ENCODE measurements at regions of chr12 and their contacts with region 1.

Region 1: DNA sequence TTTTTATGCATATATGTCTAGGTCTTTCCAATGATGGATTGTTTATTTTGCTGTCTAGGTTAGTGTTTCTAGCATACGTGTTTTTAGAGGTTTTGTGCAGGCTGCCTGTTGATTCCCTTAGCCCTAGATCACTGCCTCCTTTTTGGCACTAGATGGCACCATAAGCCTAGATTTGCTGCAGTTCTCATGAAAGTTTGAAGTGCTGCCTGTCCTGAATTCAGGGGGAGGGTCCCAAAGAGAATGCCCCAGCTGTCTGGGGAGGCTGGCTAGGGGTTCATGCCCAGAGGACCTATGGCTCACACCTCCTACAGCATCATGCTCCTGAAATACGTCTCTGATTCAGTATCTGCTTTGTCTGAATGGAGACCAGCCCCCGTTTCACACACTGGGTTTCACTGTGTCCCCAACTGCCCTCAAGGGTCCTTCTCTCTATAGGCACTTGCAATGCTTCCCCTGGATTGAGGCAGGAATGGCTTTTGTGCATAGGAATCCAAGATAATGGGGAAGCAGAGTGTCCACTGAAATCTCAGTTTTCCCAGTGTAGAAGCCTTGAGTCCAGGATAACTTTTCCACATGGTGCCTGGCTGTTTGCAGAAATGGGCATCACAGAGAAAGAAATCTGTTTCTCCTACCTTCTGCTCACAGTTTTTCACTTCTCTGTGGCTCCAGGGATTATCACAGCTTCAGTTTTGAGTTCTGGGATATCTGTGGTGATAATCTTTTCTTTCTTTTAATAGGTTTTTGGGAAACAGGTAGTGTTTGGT is 14.2 kb upstream of the TXNRD1 start:
- DNase-seq: peak; percentile 72
- ATAC-seq: peak; percentile 88
- H3K4me3 ChIP-seq: no peak overlapping the region
- H3K27ac ChIP-seq: no peak overlapping the region
- H3K4me1 ChIP-seq: no peaks in the 10 kb centered on the region; the same call in 1 of the 2 replicates
- H3K27me3 ChIP-seq: no peaks in the 10 kb centered on the region
- CTCF ChIP-seq: peak; percentile 89
- POLR2A ChIP-seq: no peak
- RAD21 ChIP-seq: peak; percentile 94

Region 2: GRCh38 chr12:104358347-104359003 is 157.1 kb after region 1 on chr12:
- CTCF ChIA-PET with region 1: no interaction called
- POLR2A ChIA-PET with region 1: no interaction called
- dilution Hi-C with region 1: no loop called
- in situ Hi-C with region 1: no loop called
- intact Hi-C with region 1: loop called (anchors 2 kb)
- DNase-seq: peak; percentile 61
- ATAC-seq: peak; percentile 39
- H3K4me3 ChIP-seq: no peak overlapping the region
- H3K27ac ChIP-seq: no peak overlapping the region
- H3K4me1 ChIP-seq: peaks cover 3% of the 10 kb centered on the region
- H3K27me3 ChIP-seq: no peaks in the 10 kb centered on the region
- CTCF ChIP-seq: peak; percentile 59
- POLR2A ChIP-seq: no peak; the same call in 1 of the 2 replicates
- RAD21 ChIP-seq: peak; percentile 52

Region 3: GRCh38 chr12:104877123-104877705 is 675.8 kb after region 1 on chr12:
- CTCF ChIA-PET with region 1: no interaction called
- POLR2A ChIA-PET with region 1: no interaction called
- dilution Hi-C with region 1: no loop called
- in situ Hi-C with region 1: loop called (anchors 10 kb)
- intact Hi-C with region 1: loop called (anchors 2 kb)
- DNase-seq: peak; percentile 49
- ATAC-seq: peak; percentile 82
- H3K4me3 ChIP-seq: no peak overlapping the region
- H3K27ac ChIP-seq: no peak overlapping the region
- H3K4me1 ChIP-seq: no peaks in the 10 kb centered on the region
- H3K27me3 ChIP-seq: no peaks in the 10 kb centered on the region
- CTCF ChIP-seq: peak; percentile 90
- POLR2A ChIP-seq: no peak
- RAD21 ChIP-seq: peak; percentile 97

Region 4: DNA sequence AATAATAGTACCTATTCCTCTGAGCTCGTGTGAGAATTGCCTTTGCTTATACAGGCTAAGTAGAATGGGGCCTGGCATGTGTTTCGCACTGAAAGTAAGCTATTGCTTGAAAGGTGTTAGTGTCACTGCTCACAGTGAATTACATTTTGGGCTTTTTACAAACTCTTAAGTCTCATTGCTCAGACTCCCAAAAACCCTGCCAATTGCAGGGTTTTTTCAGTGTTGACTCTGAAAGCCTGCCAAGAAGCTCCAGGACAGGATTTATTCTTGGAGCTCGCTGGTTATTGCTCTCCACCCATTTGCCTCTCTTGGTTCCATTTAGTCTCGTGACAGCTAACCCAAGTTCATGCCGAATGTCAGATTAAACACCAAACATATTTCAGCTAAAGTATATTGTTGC is 824.5 kb after region 1 on chr12:
- CTCF ChIA-PET with region 1: no interaction called
- POLR2A ChIA-PET with region 1: no interaction called
- dilution Hi-C with region 1: no loop called
- in situ Hi-C with region 1: no loop called
- intact Hi-C with region 1: loop called (anchors 5 kb)
- DNase-seq: peak; percentile 79
- ATAC-seq: peak; percentile 83
- H3K4me3 ChIP-seq: no peak overlapping the region
- H3K27ac ChIP-seq: no peak overlapping the region
- H3K4me1 ChIP-seq: peaks cover 6% of the 10 kb centered on the region
- H3K27me3 ChIP-seq: no peaks in the 10 kb centered on the region
- CTCF ChIP-seq: no peak
- POLR2A ChIP-seq: no peak
- RAD21 ChIP-seq: no peak

Region 5: DNA sequence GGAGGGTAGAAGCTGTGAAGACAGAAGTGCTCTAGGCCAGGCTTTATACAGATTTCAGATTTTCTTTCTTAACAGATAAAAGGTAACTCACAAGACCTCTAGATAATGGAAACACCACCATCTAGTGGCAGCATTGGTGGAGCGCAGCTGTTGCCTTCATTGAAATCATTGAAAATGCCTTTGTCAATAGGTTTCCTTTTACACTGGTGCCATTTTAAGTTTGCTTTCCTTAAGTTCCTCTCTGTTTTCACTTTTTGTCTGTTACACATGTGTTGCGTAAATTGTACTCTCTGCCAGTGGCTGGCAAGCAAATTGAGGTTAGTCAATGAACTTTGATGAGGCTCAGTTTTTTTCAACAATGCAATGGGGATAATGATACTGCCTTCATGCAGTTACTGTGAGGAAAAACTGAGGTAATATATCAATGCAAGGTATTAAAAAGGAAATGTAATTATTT is 851.7 kb after region 1 on chr12:
- CTCF ChIA-PET with region 1: no interaction called
- POLR2A ChIA-PET with region 1: no interaction called
- dilution Hi-C with region 1: no loop called
- in situ Hi-C with region 1: loop called (anchors 25 kb)
- intact Hi-C with region 1: loop called (anchors 1 kb)
- DNase-seq: peak; percentile 79
- ATAC-seq: peak; percentile 95
- H3K4me3 ChIP-seq: no peak overlapping the region
- H3K27ac ChIP-seq: no peak overlapping the region
- H3K4me1 ChIP-seq: no peaks in the 10 kb centered on the region
- H3K27me3 ChIP-seq: no peaks in the 10 kb centered on the region
- CTCF ChIP-seq: peak; percentile 87
- POLR2A ChIP-seq: no peak
- RAD21 ChIP-seq: peak; percentile 81